Posterior vena cava (tissue), 2 donors: ENCODE measurements at regions of chr6 and their contacts with region 1.

Region 1: DNA sequence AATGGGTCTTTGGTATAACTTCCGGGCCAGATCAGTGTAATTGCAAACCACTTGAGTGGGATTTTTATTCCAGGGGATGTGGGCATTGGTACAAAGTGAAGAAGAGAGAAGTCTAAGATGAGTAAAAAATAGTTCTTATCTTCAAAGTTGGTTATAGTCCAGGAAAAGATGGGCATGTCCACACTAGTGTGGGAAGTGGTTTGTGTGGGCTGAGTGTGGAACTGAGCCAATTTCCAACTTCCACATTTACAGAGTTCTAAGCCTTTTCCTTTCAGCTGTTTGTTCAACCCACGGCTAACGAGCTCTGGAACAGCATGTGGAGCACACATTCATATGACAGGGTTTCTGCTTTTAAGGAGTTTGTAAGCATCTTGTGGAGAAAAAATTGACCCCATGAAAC is 72.3 kb upstream of the IFNGR1 start:
- DNase-seq: no peak

Region 2: DNA sequence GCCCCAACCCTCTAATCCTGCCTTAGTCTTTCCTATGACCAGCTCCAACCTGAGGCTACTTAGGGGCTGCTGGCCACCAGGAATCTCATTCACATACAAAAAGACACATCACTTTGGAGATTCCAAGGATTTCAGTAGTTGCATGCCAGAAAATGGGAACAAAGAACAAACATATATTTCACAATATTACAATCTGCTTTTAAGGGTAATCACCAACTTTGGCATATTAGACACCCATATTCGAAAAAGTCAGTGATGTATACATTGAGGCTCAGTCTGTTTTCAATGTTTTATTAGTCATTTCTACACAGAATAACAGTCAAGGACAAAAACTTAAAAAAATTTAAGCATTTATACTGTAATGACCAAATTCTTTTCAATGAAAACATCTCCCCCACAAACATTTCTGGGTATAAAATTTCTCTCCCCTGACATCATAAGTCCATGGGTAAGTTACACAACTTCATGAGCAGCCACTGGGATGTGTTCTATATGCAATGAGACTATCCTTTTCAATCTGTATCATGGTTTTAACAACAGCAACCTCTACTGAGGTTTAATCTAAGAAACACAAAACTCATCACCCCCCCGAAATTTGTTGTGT is 844.8 kb before region 1 on chr6:
- intact Hi-C with region 1: loop called in 1 of 2 experiments (anchors 5 kb)
- DNase-seq: no peak